ENCODE measurements at regions of chr13 and their contacts with region 1.

Region 1: GRCh38 chr13:27182844-27183497 is 11.4 kb upstream of the USP12 start:
- DNase-seq: peak; percentile 82 to 85
- ATAC-seq: peak; percentile 83
- H3K4me3 ChIP-seq: no peak overlapping the region
- H3K27ac ChIP-seq: peak overlapping the region in 1 of 2 donors; percentile 2
- H3K4me1 ChIP-seq: no peaks in the 10 kb centered on the region
- H3K27me3 ChIP-seq: no peaks in the 10 kb centered on the region

Region 2: DNA sequence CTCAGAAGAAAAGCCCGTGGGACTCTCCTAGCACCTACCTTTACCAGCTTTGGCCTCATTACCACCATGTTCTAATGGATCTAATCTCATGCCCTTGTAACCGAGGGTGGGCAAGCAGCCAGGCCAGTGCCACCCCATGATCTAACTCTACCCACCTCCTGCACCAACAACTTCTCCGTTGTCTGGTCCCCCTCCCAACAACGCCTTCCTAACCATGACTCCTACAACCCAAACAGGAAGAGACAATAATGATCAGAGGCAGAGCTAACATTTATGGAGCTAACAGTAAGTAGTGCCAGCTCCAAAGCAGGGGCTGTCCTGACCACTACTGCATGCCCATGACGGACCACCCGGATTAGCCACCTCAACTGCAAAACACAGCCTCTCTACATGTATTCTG is 14.9 kb before region 1 on chr13:
- intact Hi-C with region 1: no loop called
- DNase-seq: no peak
- ATAC-seq: no peak
- H3K4me3 ChIP-seq: no peak overlapping the region
- H3K27ac ChIP-seq: no peak overlapping the region
- H3K4me1 ChIP-seq: peaks cover 6% of the 10 kb centered on the region in 2 donors
- H3K27me3 ChIP-seq: no peaks in the 10 kb centered on the region

Region 3: DNA sequence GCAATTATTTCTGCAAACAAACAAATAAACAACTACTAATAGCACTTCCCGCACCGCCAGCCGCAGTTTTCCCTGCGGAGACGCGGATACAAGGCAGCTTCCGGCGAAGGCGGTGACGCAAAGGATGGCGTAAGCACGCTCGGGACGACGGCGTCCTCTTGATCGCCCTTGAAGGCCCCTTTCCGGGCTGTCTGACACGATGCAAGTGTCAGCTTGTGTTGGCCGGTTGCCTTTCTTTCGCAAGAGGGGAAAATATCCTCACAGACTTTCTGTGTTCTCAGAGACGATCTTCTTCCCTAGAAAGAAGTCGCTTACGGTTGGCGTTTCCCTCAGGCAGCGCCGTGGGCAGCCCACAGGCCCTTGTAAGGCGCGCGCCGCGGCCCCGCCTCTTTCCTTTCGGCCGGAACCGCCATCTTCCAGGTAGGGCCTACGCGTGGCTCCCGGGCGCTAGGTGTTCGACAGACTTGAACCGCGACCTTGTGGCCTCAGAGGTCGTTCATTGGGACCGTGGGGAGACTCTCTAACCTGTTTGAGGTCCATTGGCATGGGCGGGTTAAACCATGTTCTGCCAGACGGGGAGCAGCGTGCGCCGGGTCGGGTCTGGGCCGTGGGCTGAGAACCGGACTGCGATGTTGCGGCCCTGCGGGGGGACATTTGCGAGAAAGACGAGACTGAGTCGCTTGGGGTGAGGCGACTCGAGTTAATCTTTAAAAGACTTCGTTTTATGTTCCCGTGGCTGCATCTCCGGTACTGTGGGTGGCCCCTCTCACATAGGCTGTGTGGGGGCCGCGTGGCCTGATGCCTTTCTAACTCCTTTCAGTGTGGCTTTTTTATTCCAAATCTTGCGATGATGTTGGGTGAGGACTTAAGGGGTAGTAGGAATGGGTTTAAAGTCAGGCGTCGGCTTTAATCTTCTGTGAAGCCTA is 68.5 kb after region 1 on chr13 and contains the start of gene RPL21:
- intact Hi-C with region 1: loop called in 1 of 2 experiments (anchors 5 kb)
- DNase-seq: peak; percentile 98
- ATAC-seq: peak; percentile 98
- H3K4me3 ChIP-seq: peak within 1 kb of the TSS; percentile 74 to 86
- H3K27ac ChIP-seq: peak within 1 kb of the TSS; percentile 35 to 74
- H3K4me1 ChIP-seq: peaks cover 2 to 6% of the 10 kb centered on the region in 2 donors
- H3K27me3 ChIP-seq: no peaks in the 10 kb centered on the region
- total RNA-seq, gene RPL21: 828 to 889 TPM

Region 4: DNA sequence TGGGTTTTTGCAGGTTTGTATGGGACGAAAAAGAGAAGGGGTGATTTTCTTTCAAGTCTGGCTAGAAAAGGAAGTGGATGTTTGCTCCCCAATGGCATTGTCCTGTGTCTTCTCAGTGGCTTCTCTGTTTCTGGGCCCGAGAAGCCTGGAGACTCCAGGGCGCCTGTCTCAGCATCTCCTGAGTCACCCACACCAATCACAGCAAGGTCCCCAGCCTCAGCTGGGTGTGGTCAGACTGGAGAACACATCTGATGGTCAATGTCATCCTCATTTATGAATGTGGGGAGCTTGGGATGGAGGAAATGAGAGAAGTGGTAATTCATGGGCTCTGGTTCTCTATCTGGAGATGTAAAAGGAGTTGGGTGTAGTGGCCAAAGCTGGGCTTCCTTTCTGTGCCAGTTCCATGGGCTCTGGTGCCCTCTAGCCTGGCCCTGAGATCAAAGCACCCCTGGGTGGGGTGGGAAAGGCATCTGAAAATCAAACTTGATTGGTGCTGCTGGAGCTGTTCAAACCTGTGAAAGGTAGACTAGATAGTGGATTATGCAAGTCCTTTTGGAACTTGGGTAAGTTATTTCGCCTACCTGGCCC is 101.0 kb after region 1 on chr13:
- intact Hi-C with region 1: no loop called
- DNase-seq: no peak
- ATAC-seq: no peak
- H3K4me3 ChIP-seq: no peak overlapping the region
- H3K27ac ChIP-seq: no peak overlapping the region
- H3K4me1 ChIP-seq: no peaks in the 10 kb centered on the region
- H3K27me3 ChIP-seq: no peaks in the 10 kb centered on the region

Measured in aorta (tissue), 5 donors.